MCF 10A (cell line): ENCODE measurements at regions of chr3 and their contacts with region 1.

Region 1: DNA sequence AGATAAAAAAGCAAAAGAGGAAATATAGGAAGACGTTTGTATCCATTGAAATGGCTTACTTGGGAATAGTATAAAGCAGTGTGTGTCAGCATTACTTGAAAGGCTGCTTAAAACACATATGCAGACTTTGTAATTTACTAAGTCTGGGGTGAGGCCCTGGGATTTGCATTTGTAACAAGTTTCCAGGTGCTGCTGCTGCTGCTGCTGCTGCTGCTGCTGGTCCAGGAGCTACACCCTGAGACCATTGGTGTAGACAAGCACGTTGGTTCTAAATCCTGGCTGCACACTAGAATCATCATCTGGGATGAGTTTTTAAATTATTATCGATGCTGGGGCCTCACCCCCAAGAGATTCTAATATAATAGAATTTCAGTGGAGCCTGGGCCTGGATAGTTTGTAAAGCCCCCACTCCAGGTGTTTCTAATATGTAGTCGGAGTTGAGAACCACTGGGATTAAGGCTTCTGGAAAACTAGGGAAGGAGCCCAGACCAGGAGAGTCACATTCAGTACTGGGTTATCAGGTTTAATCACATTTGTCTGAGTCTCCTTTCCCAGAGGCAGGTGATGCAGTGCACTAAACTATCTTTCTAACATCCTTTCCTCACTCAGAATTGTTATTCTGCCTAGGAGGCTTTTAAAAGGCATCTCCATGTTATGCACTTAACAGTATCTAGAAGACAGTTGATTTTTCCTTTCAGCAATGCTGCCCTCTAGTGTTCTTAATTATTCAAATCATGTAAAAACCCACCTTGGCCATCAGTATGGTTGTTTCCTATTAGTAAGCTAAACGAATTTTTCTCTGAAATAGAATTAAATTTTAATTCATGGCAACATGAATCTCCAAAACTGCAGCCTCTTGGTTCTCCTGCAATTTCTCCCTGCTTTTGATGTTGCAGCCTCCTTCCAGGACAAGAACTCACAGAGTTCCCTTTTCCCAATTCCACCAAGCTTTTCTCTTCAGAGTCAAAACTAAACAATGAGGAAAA is 45.4 kb downstream of the SSR3 start:
- DNase-seq: peak; percentile 58
- H3K4me3 Mint-ChIP-seq: no peak overlapping the region
- H3K27ac Mint-ChIP-seq: no peak overlapping the region
- H3K4me1 Mint-ChIP-seq: no peaks in the 10 kb centered on the region
- H3K27me3 Mint-ChIP-seq: peaks cover 48% of the 10 kb centered on the region
- CTCF ChIP-seq: peak; percentile 43

Region 2: GRCh38 chr3:155995525-155996351 is 513.7 kb before region 1 on chr3:
- CTCF ChIA-PET with region 1: interaction called, 3 read pairs
- POLR2A ChIA-PET with region 1: no interaction called
- intact Hi-C with region 1: loop called (anchors 5 kb)
- DNase-seq: peak; percentile 59
- H3K4me3 Mint-ChIP-seq: no peak overlapping the region
- H3K27ac Mint-ChIP-seq: no peak overlapping the region
- H3K4me1 Mint-ChIP-seq: no peaks in the 10 kb centered on the region
- H3K27me3 Mint-ChIP-seq: peaks cover 7% of the 10 kb centered on the region
- CTCF ChIP-seq: peak; percentile 40

Region 3: DNA sequence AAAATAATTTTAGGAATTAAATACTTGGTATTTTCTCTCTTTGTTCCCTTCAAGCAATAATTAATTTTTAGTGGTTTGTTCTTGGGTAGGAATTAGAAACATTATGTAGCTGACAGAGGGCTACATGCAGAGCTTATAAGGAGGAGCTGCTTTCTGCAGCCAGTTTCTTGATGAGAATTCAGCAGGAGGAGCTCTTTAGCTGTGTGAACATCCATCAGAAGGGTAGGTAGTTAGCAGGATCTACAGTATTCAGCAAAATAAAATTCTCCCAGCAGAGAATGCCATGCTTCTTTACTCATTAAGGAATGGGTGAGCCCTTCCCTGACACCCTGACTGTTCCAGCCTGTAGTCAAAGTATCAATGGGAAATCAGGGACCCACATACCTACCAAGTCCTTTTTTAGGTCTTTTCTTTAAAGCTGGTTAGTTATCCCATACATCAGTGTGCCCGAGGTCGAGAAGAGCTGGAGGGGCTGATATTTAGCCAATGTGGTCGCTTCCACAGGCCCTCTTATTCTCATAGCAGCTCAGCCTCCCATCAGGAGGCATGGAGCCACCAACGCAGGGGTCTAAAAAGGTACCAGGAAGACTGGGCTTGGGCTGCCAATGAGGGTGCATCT is 335.1 kb before region 1 on chr3:
- CTCF ChIA-PET with region 1: interaction called, 29 read pairs
- POLR2A ChIA-PET with region 1: no interaction called
- intact Hi-C with region 1: loop called (anchors 1 kb)
- DNase-seq: peak; percentile 51
- H3K4me3 Mint-ChIP-seq: no peak overlapping the region
- H3K27ac Mint-ChIP-seq: no peak overlapping the region
- H3K4me1 Mint-ChIP-seq: no peaks in the 10 kb centered on the region
- H3K27me3 Mint-ChIP-seq: no peaks in the 10 kb centered on the region
- CTCF ChIP-seq: peak; percentile 25

Region 4: DNA sequence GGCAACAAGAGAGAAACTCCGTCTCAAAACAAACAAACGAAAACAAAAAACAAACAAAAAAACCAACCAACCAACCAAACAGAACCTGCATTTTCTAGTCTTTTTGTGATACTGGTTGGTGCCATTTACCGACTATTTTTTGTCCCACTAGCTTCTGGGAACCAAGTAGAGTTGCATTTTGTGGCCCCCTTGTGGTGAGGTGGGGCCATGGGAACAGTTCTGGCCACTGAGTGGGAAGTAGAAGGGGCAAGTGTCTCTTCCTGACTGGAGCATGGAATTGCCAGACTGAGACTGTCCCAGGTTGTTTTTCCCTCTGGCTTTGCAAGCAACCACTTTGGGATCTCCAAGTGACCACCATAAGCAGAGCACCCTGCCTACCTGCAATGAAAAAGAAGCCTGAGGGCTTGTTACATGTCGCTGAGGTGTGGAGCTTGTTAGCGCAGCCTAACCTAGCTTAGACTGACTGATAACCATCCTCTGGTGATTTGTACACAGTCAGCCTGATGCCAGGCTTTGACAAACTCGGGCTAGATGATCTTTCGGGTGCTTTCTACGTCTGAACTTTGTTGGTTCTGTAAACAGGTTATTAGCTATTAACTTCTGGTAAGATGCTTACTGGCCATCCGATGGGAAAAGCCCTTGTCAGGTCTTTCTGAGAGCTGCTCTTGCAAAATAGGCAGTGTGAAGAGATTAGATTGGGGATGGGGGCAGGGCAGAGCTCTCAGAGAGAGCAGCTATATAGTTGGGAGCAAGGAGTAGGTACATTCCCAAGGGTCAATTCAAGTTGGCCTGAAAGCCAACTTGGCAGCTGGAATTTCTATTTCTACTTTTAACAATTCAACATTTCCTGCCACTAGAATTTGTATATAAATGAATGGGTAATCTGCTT is 126.8 kb before region 1 on chr3:
- CTCF ChIA-PET with region 1: interaction called, 4 read pairs
- POLR2A ChIA-PET with region 1: no interaction called
- intact Hi-C with region 1: loop called (anchors 5 kb)
- DNase-seq: peak; percentile 65
- H3K4me3 Mint-ChIP-seq: no peak overlapping the region
- H3K27ac Mint-ChIP-seq: no peak overlapping the region
- H3K4me1 Mint-ChIP-seq: no peaks in the 10 kb centered on the region
- H3K27me3 Mint-ChIP-seq: peaks cover 73% of the 10 kb centered on the region
- CTCF ChIP-seq: peak; percentile 64

Region 5: DNA sequence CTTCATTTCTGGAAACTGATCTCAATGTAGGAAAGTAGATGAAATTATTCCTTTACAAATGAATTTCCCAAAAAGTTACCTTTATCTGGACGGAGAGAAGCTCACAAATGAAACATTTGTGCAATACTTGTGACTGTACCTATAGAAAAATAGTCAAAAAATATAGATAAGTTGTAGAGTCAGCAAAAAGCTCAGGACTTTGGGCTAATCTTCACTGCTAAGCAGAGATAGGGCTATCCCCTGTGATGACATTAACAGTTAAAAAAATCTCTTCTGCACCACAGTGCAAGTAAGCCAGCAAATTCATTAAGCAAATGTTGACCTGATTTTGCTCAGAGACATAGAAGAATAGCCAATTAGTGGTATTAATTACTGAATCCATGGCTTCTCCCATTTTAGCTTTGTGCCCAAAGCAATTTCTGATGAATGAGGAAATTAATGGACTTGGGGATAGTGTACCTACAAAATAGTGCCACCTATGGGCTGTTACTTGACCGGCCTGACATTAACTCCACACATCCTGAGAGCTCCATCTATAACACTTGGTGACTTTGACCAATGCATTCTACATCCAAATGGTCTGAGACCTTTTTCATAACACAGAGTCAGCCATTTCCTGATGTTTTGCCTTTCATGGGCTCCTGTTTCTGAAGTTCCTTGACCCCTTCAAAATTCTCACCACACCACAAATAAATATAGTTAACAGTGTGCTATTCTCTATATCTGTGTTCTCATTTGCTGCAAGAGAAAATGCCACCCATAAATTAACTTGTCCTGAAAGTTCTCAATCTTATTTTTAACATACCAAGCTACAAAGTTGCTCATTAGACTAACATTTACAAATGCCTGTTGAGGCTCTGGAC is 59.5 kb before region 1 on chr3:
- CTCF ChIA-PET with region 1: interaction called, 20 read pairs
- POLR2A ChIA-PET with region 1: interaction called, 3 read pairs
- intact Hi-C with region 1: loop called (anchors 1 kb)
- DNase-seq: peak; percentile 48
- H3K4me3 Mint-ChIP-seq: no peak overlapping the region
- H3K27ac Mint-ChIP-seq: no peak overlapping the region
- H3K4me1 Mint-ChIP-seq: peaks cover 5% of the 10 kb centered on the region
- H3K27me3 Mint-ChIP-seq: peaks cover 43% of the 10 kb centered on the region
- CTCF ChIP-seq: peak; percentile 49

Region 6: GRCh38 chr3:156474560-156475389 is 34.7 kb before region 1 on chr3:
- CTCF ChIA-PET with region 1: no interaction called
- POLR2A ChIA-PET with region 1: no interaction called
- intact Hi-C with region 1: loop called (anchors 5 kb)
- DNase-seq: peak; percentile 8
- H3K4me3 Mint-ChIP-seq: no peak overlapping the region
- H3K27ac Mint-ChIP-seq: no peak overlapping the region
- H3K4me1 Mint-ChIP-seq: no peaks in the 10 kb centered on the region
- H3K27me3 Mint-ChIP-seq: peaks cover 37% of the 10 kb centered on the region
- CTCF ChIP-seq: peak; percentile 13

Region 7: DNA sequence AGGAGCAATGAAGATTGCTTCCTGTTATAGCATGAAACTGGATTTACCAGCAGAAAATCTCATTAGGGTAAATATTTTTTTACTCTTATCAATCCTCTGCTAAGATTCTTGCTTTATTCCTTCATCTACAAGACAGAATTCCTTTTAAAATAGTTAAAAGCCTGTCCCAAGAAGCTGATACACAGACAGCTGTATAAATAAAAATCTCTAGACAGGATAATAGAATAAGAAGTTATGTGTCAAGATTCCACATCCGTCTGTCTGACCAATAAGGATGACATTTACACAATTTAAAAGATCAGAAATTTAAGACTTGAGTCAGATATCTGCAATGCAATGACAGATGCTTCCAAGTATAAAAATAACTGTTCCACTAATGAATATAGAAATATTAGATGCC is 12.2 kb before region 1 on chr3:
- CTCF ChIA-PET with region 1: interaction called, 16 read pairs
- POLR2A ChIA-PET with region 1: no interaction called
- intact Hi-C with region 1: no loop called
- DNase-seq: no peak
- H3K4me3 Mint-ChIP-seq: no peak overlapping the region
- H3K27ac Mint-ChIP-seq: no peak overlapping the region
- H3K4me1 Mint-ChIP-seq: no peaks in the 10 kb centered on the region
- H3K27me3 Mint-ChIP-seq: peaks cover 25% of the 10 kb centered on the region
- CTCF ChIP-seq: no peak